Stomach (tissue), 19 donors: ENCODE measurements at regions of chr20 and their contacts with region 1.

Region 1: GRCh38 chr20:33249456-33249855 is 13.7 kb downstream of the BPIFA1 start:
- DNase-seq: no peak
- H3K4me3 ChIP-seq: no peak overlapping the region
- H3K27ac ChIP-seq: no peak overlapping the region
- H3K4me1 ChIP-seq: no peaks in the 10 kb centered on the region
- H3K27me3 ChIP-seq: no peaks in the 10 kb centered on the region
- CTCF ChIP-seq: no peak
- EP300 ChIP-seq: no peak
- POLR2A ChIP-seq: no peak

Region 2: DNA sequence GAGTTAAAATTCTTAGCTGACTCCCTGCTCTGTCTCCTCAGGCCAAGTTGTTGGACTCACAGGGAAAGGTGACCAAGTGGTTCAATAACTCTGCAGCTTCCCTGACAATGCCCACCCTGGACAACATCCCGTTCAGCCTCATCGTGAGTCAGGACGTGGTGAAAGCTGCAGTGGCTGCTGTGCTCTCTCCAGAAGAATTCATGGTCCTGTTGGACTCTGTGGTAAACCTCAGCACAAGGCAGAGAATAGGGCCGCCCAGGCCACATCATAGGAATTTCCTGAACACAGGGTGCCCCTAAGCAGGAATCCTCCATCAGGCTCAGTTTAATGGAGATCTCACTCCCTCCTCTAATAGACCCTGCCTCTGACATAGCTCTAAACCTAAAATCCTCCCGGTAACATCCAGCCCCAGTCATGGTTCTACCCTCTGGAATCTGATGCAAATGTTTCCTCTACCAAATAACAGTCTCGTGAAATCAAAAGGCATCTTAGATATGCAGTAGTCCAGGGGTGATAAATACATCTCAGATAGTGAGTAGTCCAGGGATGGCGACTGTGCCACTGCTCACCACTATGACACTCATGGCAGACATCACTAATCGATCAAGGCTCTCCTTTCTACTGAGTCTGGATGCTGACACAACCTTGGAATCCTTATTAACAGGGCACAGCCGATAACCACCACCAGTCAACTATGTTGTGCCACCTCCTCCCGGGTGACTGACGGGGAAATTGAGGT is 51.9 kb after region 1 on chr20:
- intact Hi-C with region 1: loop called (anchors 10 kb)
- DNase-seq: no peak
- H3K4me3 ChIP-seq: no peak overlapping the region
- H3K27ac ChIP-seq: no peak overlapping the region
- H3K4me1 ChIP-seq: peaks cover 0 to 6% (median 5%) of the 10 kb centered on the region in 4 donors
- H3K27me3 ChIP-seq: peaks cover 0 to 24% (median 0%) of the 10 kb centered on the region in 3 donors
- CTCF ChIP-seq: no peak
- EP300 ChIP-seq: no peak
- POLR2A ChIP-seq: no peak

Region 3: GRCh38 chr20:33460711-33461110 is 211.3 kb after region 1 on chr20:
- intact Hi-C with region 1: no loop called
- DNase-seq: no peak
- H3K4me3 ChIP-seq: no peak overlapping the region
- H3K27ac ChIP-seq: no peak overlapping the region
- H3K4me1 ChIP-seq: peaks cover 0 to 6% (median 0%) of the 10 kb centered on the region in 4 donors
- H3K27me3 ChIP-seq: no peaks in the 10 kb centered on the region
- CTCF ChIP-seq: no peak
- EP300 ChIP-seq: no peak
- POLR2A ChIP-seq: no peak